ENCODE measurements at regions of chr4 and their contacts with region 1.

Region 1: GRCh38 chr4:141133146-141133998 is at the start of gene RNF150:
- DNase-seq: peak; percentile 87
- H3K4me3 ChIP-seq: peak within 1 kb of the TSS; percentile 80 to 97
- H3K27ac ChIP-seq: peak within 1 kb of the TSS; percentile 53 to 95
- H3K4me1 ChIP-seq: peaks cover 0 to 16% of the 10 kb centered on the region in 2 experiments; a peak in 2 of 4 replicates
- H3K27me3 ChIP-seq: no peaks in the 10 kb centered on the region
- CTCF ChIP-seq: peak; percentile 91
- EP300 ChIP-seq: 0 out of 4 replicates have a peak, but pooled peaks of 1 of the 2 experiments have one; percentile 16
- RAD21 ChIP-seq: peak; percentile 98
- polyA plus RNA-seq, gene RNF150: 5.8 and 8.8 TPM in 2 replicates

Region 2: GRCh38 chr4:140756319-140757231 is 376.8 kb before region 1 on chr4 and contains the start of gene TBC1D9:
- CTCF ChIA-PET with region 1: interaction called, 3 read pairs
- POLR2A ChIA-PET with region 1: interaction called, 11 read pairs
- DNase-seq: peak; percentile 81
- H3K4me3 ChIP-seq: peak within 1 kb of the TSS; percentile 89 to 93
- H3K27ac ChIP-seq: peak within 1 kb of the TSS; percentile 77 to 91
- H3K4me1 ChIP-seq: peaks cover 0 to 10% of the 10 kb centered on the region in 2 experiments; a peak in 3 of 4 replicates
- H3K27me3 ChIP-seq: no peaks in the 10 kb centered on the region
- CTCF ChIP-seq: no peak; the same call in none of the 2 replicates
- EP300 ChIP-seq: peak; percentile 33 to 35; a peak in 2 of 4 replicates
- RAD21 ChIP-seq: no peak; the same call in 1 of the 2 replicates
- polyA plus RNA-seq, gene TBC1D9: 13.5 and 16.1 TPM in 2 replicates

Region 3: GRCh38 chr4:140893939-140894338 is 239.4 kb before region 1 on chr4:
- CTCF ChIA-PET with region 1: interaction called, 17 read pairs
- POLR2A ChIA-PET with region 1: no interaction called
- DNase-seq: no peak
- H3K4me3 ChIP-seq: no peak overlapping the region
- H3K27ac ChIP-seq: peak overlapping the region; percentile 32 to 83; a peak in 3 of 4 replicates
- H3K4me1 ChIP-seq: peaks cover 0 to 17% of the 10 kb centered on the region in 2 experiments; a peak in 2 of 4 replicates
- H3K27me3 ChIP-seq: no peaks in the 10 kb centered on the region
- CTCF ChIP-seq: no peak
- EP300 ChIP-seq: no peak; a peak in 1 of 4 replicates
- RAD21 ChIP-seq: no peak

Region 4: DNA sequence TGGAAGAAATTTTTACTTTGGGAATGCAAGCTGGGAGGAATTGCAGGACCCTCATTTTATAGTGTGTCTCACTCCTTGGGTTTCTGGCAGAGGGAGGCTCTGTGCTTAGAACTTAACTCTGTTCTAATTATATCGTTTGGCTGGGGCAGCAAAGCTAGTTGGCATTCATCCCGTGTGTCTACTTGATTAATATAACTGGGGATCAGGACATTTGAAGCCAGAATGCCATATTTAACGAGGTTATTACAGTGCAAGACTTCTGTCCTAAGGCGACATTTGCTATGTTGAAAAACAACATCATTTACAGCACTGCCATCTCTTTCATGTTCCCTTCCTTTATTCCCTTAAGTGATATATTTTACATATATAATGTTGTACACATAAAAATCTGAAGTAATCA is 198.1 kb before region 1 on chr4:
- CTCF ChIA-PET with region 1: interaction called, 20 read pairs
- POLR2A ChIA-PET with region 1: interaction called, 3 read pairs
- DNase-seq: peak; percentile 70
- H3K4me3 ChIP-seq: no peak overlapping the region
- H3K27ac ChIP-seq: peak overlapping the region; percentile 58 to 98
- H3K4me1 ChIP-seq: peaks cover 44 to 50% of the 10 kb centered on the region in 2 experiments
- H3K27me3 ChIP-seq: no peaks in the 10 kb centered on the region
- CTCF ChIP-seq: no peak
- EP300 ChIP-seq: peak; percentile 65 to 96; a peak in 3 of 4 replicates
- RAD21 ChIP-seq: peak; percentile 48

Region 5: DNA sequence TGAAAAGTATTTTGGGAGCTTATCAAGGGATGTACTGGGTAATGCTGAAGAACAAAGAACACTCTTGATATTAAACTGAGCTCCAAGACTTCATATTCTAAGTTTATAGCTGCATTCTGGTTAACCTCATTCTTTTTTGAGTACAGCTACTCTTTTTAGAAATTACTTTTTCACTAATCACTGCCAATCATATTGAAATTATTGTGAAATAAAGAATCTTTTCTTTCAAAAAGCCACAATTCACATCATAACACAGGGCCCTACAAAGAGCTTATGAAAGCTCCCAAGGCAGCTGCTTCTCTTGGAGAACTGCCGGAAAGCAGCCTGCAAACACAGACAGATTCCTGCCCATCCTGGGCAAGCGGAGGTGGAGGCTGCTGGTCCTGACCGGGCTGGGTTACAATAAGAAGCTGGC is 121.5 kb before region 1 on chr4:
- CTCF ChIA-PET with region 1: interaction called, 10 read pairs
- POLR2A ChIA-PET with region 1: no interaction called
- DNase-seq: no peak
- H3K4me3 ChIP-seq: no peak overlapping the region
- H3K27ac ChIP-seq: peak overlapping the region in 1 of 2 experiments; percentile 31; a peak in 1 of 4 replicates
- H3K4me1 ChIP-seq: peaks cover 0 to 24% of the 10 kb centered on the region in 2 experiments; a peak in 2 of 4 replicates
- H3K27me3 ChIP-seq: no peaks in the 10 kb centered on the region
- CTCF ChIP-seq: no peak
- EP300 ChIP-seq: no peak
- RAD21 ChIP-seq: no peak

Region 6: GRCh38 chr4:141102367-141102766 is 31.0 kb before region 1 on chr4:
- CTCF ChIA-PET with region 1: interaction called, 23 read pairs
- POLR2A ChIA-PET with region 1: no interaction called
- DNase-seq: peak; percentile 58
- H3K4me3 ChIP-seq: peak overlapping the region in 1 of 2 experiments; percentile 26; a peak in 3 of 4 replicates
- H3K27ac ChIP-seq: peak overlapping the region; percentile 78 to 87
- H3K4me1 ChIP-seq: peaks cover 0 to 16% of the 10 kb centered on the region in 2 experiments; a peak in 2 of 4 replicates
- H3K27me3 ChIP-seq: no peaks in the 10 kb centered on the region
- CTCF ChIP-seq: no peak
- EP300 ChIP-seq: peak; percentile 28 to 99; a peak in 3 of 4 replicates
- RAD21 ChIP-seq: peak; percentile 42; the same call in 1 of the 2 replicates

Region 7: DNA sequence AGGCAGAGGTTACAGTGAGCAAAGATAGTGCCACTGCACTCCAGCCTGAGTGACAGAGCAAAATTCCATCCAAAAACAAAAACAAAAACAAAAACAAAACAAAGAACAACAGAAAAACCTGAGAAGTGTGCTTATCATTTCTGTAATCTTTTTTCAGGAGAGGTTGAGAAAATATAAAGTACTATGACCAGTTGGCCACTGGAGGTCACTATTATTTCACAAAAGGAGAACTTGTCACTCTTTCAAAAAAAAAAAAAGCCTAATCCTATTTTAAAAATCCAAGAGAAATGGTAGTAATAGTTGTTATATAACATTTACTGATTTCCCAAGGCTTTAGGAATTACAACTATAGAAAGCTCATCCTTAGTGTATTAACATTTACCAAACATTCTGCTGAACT is 24.8 kb after region 1 on chr4:
- CTCF ChIA-PET with region 1: interaction called, 14 read pairs
- POLR2A ChIA-PET with region 1: interaction called, 4 read pairs
- DNase-seq: peak; percentile 39
- H3K4me3 ChIP-seq: peak overlapping the region in 1 of 2 experiments; percentile 23; a peak in 1 of 4 replicates
- H3K27ac ChIP-seq: no peak overlapping the region
- H3K4me1 ChIP-seq: peaks cover 0 to 13% of the 10 kb centered on the region in 2 experiments; a peak in 2 of 4 replicates
- H3K27me3 ChIP-seq: no peaks in the 10 kb centered on the region
- CTCF ChIP-seq: peak; percentile 76
- EP300 ChIP-seq: no peak
- RAD21 ChIP-seq: peak; percentile 84

Region 8: GRCh38 chr4:141686146-141686775 is 552.9 kb after region 1 on chr4:
- CTCF ChIA-PET with region 1: no interaction called
- POLR2A ChIA-PET with region 1: no interaction called
- DNase-seq: no peak
- H3K4me3 ChIP-seq: no peak overlapping the region
- H3K27ac ChIP-seq: no peak overlapping the region
- H3K4me1 ChIP-seq: peaks cover 0 to 2% of the 10 kb centered on the region in 2 experiments; a peak in 2 of 4 replicates
- H3K27me3 ChIP-seq: no peaks in the 10 kb centered on the region
- CTCF ChIP-seq: no peak
- EP300 ChIP-seq: 0 out of 4 replicates have a peak, but pooled peaks of 1 of the 2 experiments have one; percentile 5
- RAD21 ChIP-seq: no peak

Measured in SK-N-SH (cell line).